Gastrocnemius medialis (tissue), 4 donors: ENCODE measurements at regions of chr2 and their contacts with region 1.

Region 1: DNA sequence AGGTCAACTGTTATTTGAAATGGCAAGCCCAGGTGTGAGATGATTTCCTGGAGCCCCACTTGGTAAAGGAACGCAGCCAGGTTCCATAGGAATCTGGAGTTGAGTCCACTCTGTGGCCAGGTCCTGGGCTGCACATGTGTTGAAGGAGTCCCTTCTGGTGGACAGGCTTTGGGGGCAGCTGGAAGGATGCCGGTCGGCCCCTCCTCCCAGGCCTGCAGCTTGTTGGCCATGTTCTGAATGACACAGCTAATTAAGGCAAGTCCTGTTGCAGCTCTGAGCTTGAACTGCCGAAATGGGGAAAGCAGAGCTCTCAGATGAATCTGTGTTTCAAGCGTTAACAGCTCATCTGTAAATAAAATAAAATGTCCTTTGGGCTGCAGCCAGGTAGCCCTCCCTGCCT is 23.8 kb downstream of the EN1 start:
- DNase-seq: no peak
- ATAC-seq: peak in 1 of 2 donors; percentile 40
- H3K4me3 ChIP-seq: no peak overlapping the region
- H3K27ac ChIP-seq: peak overlapping the region; percentile 15 to 80 (median 57)
- H3K4me1 ChIP-seq: peaks cover 26 to 35% of the 10 kb centered on the region in 2 donors
- H3K27me3 ChIP-seq: no peaks in the 10 kb centered on the region
- CTCF ChIP-seq: no peak
- POLR2A ChIP-seq: no peak

Region 2: DNA sequence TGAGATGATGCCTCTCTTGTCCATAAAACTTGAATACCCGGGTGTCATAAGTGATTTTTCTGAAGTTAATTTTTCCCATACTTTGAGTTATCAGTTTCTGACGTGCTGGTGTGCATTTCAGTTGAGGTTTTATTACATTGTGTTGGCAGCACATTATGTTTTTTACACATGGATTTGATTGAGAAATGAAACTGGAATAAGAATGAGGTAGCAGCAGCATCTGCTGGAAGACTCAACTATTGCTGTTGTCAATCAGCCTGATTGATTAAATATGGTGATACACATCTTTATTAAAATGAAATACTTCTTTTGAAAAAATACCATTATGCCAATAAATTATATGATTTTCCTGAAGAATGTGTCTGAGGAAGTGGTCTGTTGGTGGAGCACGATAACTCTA is 674.8 kb before region 1 on chr2:
- in situ Hi-C with region 1: no loop called
- intact Hi-C with region 1: no loop called
- DNase-seq: no peak
- ATAC-seq: peak in 1 of 2 donors; percentile 54
- H3K4me3 ChIP-seq: no peak overlapping the region
- H3K27ac ChIP-seq: no peak overlapping the region
- H3K4me1 ChIP-seq: no peaks in the 10 kb centered on the region
- H3K27me3 ChIP-seq: no peaks in the 10 kb centered on the region
- CTCF ChIP-seq: no peak
- POLR2A ChIP-seq: no peak

Region 3: DNA sequence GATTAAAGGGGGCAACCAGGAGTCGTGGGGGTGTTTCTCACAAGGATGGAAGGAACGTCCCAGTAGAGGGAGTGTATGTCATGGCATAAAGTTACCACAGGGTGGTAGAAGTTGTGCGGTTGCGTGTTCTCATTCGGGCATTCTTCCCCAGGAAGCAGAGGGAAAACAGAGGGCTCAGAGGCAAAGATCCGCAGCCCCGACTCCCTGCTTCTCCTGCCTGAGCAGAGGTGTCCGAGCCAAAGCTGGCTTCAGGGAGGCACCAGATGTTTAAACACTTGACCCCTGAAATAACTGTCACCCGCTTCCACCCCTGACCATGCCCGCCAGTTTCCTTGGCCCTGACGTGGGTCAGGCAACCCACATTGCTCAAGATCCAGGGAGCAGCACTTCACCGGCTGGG is 59.8 kb before region 1 on chr2:
- in situ Hi-C with region 1: no loop called
- intact Hi-C with region 1: loop called (anchors 5 kb)
- DNase-seq: peak; percentile 20 to 55
- ATAC-seq: peak; percentile 98 to 100
- H3K4me3 ChIP-seq: peak overlapping the region; percentile 24 to 48 (median 34)
- H3K27ac ChIP-seq: peak overlapping the region; percentile 50 to 64 (median 63)
- H3K4me1 ChIP-seq: no peaks in the 10 kb centered on the region
- H3K27me3 ChIP-seq: no peaks in the 10 kb centered on the region
- CTCF ChIP-seq: peak; percentile 67 to 78 (median 70)
- POLR2A ChIP-seq: no peak

Region 4: GRCh38 chr2:118784860-118785259 is 38.8 kb before region 1 on chr2:
- in situ Hi-C with region 1: no loop called
- intact Hi-C with region 1: loop called (anchors 5 kb)
- DNase-seq: no peak
- ATAC-seq: no peak
- H3K4me3 ChIP-seq: no peak overlapping the region
- H3K27ac ChIP-seq: no peak overlapping the region
- H3K4me1 ChIP-seq: peaks cover 7 to 10% of the 10 kb centered on the region in 2 donors
- H3K27me3 ChIP-seq: no peaks in the 10 kb centered on the region
- CTCF ChIP-seq: no peak
- POLR2A ChIP-seq: no peak

Region 5: DNA sequence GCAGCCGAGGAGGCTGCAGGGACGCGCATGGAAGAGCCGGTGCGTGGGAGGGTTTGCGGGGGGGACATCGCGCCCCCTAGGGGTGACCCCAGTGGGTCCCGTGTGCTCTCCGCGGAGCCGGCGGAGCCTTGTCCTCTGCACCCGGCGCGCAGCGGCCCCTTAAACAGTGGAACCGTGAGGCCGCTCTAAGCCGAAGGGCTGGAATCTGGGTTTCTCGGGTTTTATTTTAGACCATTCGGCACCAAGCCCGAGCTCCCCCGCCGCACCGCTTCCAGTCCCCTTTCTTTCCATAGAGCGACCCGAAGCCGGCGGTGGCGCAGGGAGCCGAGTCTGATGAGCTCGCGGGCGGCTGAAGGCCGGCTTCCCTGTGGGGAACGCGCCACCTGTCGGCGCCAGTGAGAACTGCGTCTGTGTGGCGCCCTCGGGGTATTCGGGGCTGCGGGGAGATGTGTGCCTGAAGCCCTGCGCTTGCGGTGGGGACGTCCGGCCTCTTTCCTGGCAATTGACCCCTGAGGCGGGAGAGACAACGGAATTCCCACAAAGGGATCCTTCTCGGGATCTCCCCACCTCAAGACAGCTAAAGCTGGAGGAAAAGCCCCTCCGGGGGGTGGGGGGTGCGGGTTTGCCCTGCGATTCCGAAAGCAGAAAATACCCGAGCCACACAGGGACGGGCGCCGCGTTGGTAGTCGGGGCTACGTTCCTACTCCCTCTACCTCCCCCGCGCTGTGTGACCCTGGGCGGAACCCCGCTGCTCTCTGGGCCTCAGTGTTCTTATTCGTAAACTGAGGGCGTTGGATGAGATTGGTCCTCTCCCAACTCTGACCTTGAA is 32.0 kb after region 1 on chr2:
- in situ Hi-C with region 1: no loop called
- intact Hi-C with region 1: loop called (anchors 2 kb)
- DNase-seq: peak; percentile 65 to 79
- ATAC-seq: peak; percentile 63 to 65
- H3K4me3 ChIP-seq: peak overlapping the region; percentile 64 to 87 (median 73)
- H3K27ac ChIP-seq: peak overlapping the region; percentile 92 to 97 (median 96)
- H3K4me1 ChIP-seq: peaks cover 0 to 10% of the 10 kb centered on the region in 2 donors
- H3K27me3 ChIP-seq: peaks cover 0 to 14% (median 7%) of the 10 kb centered on the region in 3 donors
- CTCF ChIP-seq: peak; percentile 90 to 99 (median 98)
- POLR2A ChIP-seq: no peak